ENCODE measurements at regions of chrX and their contacts with region 1.

Region 1: GRCh38 chrX:68828740-68829552 is at the start of gene EFNB1:
- DNase-seq: peak; percentile 92 to 96
- H3K4me3 ChIP-seq: peak within 1 kb of the TSS; percentile 74 to 83
- H3K27ac ChIP-seq: peak within 1 kb of the TSS; percentile 76 to 82
- H3K4me1 ChIP-seq: peaks cover 0 to 29% (median 6%) of the 10 kb centered on the region in 4 donors
- H3K27me3 ChIP-seq: no peaks in the 10 kb centered on the region
- CTCF ChIP-seq: no peak

Region 2: DNA sequence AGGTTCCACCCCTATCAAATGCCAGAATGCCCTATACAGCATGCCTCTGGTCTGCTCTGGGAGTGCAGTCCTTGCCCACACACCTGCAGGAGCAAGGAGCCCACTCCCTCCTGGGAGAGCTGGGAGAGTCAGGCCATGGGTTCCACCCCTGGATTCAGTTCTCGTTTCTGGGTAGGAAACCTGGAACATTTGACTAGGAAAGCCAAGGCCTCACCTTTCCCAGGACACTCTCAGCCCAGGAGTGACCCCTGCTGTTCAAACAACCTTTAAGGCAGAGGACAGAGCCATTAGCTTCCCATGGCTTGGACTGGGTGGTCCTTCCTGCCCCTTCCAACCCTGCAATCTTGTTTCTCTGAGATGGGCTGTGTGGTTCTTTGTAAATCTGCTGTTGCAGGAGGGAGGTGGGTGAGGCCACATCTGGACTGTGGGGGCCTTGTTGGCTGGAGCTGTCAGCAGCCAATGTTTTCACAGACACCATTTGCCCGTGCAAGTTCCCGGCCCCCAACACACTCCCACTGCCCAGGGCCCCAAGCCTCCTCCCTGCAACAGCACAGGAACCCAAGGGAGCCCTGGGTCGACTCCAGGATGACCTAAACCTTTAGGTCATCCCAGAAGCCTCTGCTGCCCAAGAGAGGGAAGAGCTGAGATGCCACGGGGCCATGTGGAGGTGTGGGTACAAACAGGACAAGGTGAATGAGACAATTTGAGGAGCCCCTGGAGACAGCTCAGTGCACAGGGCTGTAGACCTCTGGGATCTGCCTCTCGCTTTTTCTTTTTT is 231.9 kb after region 1 on chrX:
- intact Hi-C with region 1: loop called (anchors 10 kb)
- DNase-seq: peak in 1 of 2 donors; percentile 22
- H3K4me3 ChIP-seq: no peak overlapping the region
- H3K27ac ChIP-seq: no peak overlapping the region
- H3K4me1 ChIP-seq: no peaks in the 10 kb centered on the region
- H3K27me3 ChIP-seq: no peaks in the 10 kb centered on the region
- CTCF ChIP-seq: peak; percentile 20 to 31

Region 3: DNA sequence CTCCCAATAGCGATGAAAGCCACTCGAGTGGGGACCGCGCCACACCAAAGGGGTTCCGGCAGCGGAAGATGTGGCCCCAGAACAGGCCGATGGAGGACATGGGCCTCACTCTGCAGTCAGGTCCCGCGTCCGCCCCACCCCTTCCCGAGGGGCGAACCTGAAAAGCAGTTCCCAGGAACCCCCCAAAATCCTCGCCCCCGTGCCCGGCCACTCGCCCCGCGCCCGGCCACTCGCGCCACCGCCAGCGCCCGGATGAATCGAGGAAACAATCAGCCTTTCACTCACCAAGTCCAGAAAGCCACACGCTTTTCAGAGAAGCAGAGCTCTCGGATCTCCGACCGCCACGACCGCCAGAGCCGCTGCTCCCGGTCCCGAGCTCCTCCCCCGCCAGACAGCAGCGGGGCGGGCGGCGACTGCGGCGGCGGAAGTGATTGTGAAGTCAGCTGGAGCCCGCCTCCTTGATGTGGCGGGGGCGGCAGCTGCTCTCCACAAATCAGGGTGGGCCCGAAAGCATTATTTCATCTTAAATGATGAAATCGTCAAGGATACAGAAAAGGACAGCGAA is 336.2 kb after region 1 on chrX and contains the start of gene PJA1:
- intact Hi-C with region 1: loop called (anchors 2 kb)
- DNase-seq: peak; percentile 77 to 87
- H3K4me3 ChIP-seq: peak within 1 kb of the TSS; percentile 82 to 84
- H3K27ac ChIP-seq: peak within 1 kb of the TSS; percentile 84 to 89
- H3K4me1 ChIP-seq: no peaks in the 10 kb centered on the region
- H3K27me3 ChIP-seq: no peaks in the 10 kb centered on the region
- CTCF ChIP-seq: no peak

Region 4: DNA sequence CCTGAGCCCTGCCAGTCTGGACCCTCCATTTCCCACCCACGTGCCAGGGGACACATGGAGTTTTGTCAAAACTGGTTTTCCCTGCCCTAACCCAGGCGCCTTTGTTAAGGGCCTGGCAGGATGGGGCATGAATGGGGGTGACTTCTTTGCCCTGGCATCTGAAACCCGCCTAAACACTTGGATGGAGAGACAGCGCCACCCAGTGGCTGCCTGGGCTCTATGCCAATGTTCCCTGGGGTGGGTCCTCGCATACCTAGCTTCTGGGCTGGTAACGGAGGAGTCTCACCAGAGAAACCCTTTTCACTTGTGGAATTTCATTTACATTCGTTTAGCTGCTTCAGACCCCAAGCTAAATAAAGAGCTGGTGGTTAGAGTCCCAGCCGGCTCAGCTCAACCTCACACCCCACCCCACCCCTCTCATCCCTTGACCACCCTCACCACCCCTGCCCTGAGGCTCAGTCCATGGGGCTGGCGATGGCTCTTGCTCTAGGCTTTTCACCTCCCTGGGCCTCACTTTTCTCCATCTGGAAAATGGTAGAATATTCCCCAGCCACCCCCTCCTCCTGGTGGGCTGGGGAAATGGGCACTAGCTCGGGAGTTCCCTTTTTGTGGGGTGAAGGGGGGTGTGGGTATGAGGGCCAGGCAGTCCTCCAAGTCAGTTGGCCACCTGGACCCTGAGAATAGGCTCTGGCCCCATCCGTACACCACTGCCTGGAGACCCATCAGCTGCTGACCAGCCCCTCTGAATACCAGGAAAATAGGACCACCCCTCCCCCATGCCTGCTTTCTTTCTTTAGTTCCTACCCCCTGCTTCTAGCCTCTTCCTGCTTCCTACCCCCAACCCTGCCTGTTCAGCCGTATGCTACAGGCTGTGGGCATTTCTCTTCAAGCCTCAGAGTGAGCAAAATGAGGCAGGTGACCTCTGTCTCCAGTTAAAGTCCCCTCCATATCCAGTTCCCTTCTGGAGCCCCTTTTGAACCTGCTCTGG is 393.5 kb after region 1 on chrX:
- intact Hi-C with region 1: loop called (anchors 5 kb)
- DNase-seq: peak; percentile 56 to 75
- H3K4me3 ChIP-seq: no peak overlapping the region
- H3K27ac ChIP-seq: no peak overlapping the region
- H3K4me1 ChIP-seq: peaks cover 0 to 10% (median under 1%) of the 10 kb centered on the region in 4 donors
- H3K27me3 ChIP-seq: no peaks in the 10 kb centered on the region
- CTCF ChIP-seq: peak; percentile 58 to 71

Region 5: DNA sequence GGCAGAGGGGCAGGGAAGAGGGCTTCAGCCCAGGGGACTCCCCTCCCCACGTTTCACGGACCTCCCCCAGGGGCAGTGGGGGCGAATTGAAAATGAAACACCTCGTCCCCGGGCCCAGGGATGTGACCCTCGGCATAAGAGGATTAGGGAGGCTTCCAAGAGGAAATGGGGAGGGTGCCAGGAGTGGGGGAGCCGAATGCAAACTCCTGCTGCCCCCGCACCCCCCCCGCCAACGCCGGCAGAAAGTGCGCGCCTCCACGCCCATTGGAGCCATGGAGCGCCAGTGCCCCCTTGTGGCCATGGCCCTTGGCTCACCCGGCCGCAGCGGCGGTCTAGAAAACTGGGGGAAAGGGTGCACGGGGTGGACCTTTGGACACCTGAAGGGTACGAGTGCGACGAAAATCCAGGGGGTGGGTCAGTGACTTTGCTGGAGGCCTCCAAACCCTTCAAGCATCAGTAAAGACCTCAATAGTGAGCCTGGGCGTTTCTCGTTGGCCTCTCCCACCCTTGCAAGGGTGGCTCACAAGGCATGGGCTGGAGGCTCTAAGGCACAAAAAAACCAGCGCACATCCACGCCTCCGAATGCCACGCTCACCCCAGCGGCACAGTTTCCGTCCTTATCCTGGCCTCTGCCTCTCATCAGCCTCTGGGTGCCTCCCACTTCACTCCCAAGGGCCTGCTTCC is 457.1 kb after region 1 on chrX:
- intact Hi-C with region 1: loop called (anchors 5 kb)
- DNase-seq: peak; percentile 29 to 71
- H3K4me3 ChIP-seq: peak overlapping the region; percentile 50 to 55
- H3K27ac ChIP-seq: no peak overlapping the region
- H3K4me1 ChIP-seq: peaks cover 0 to 11% (median 4%) of the 10 kb centered on the region in 4 donors
- H3K27me3 ChIP-seq: no peaks in the 10 kb centered on the region
- CTCF ChIP-seq: peak; percentile 78 to 80